ENCODE measurements at regions of chr1 and their contacts with region 1.

Region 1: GRCh38 chr1:193121616-193122593 is at the start of gene CDC73:
- DNase-seq: peak; percentile 88
- H3K4me3 ChIP-seq: peak within 1 kb of the TSS; percentile 67 to 90 (median 79)
- H3K27ac ChIP-seq: peak within 1 kb of the TSS; percentile 85 to 97 (median 96)
- H3K4me1 ChIP-seq: peaks cover 6 to 41% (median 13%) of the 10 kb centered on the region in 3 donors
- H3K27me3 ChIP-seq: no peaks in the 10 kb centered on the region
- CTCF ChIP-seq: peak; percentile 84 to 99 (median 96)
- POLR2A ChIP-seq: peak in 2 of 4 donors; percentile 83 to 90
- total RNA-seq, gene CDC73: 17.3 to 39.5 (median 26.6) TPM

Region 2: GRCh38 chr1:192808518-192809306 is 313.2 kb before region 1 on chr1 and contains the start of gene RGS2:
- intact Hi-C with region 1: loop called (anchors 5 kb)
- DNase-seq: peak; percentile 69
- H3K4me3 ChIP-seq: peak within 1 kb of the TSS; percentile 48 to 86 (median 72)
- H3K27ac ChIP-seq: peak within 1 kb of the TSS; percentile 84 to 96 (median 90)
- H3K4me1 ChIP-seq: peaks cover 0 to 42% (median 13%) of the 10 kb centered on the region in 3 donors
- H3K27me3 ChIP-seq: no peaks in the 10 kb centered on the region
- CTCF ChIP-seq: peak in 1 of 6 experiments; percentile 2
- POLR2A ChIP-seq: peak in 3 of 4 donors; percentile 90 to 99 (median 99)
- total RNA-seq, gene RGS2: 7.9 to 115 (median 26.6) TPM

Region 3: GRCh38 chr1:192877288-192877886 is 244.5 kb before region 1 on chr1:
- intact Hi-C with region 1: no loop called
- DNase-seq: no peak
- H3K4me3 ChIP-seq: no peak overlapping the region
- H3K27ac ChIP-seq: peak overlapping the region in 1 of 4 donors; percentile 34
- H3K4me1 ChIP-seq: peaks cover 0 to 9% (median 0%) of the 10 kb centered on the region in 3 donors
- H3K27me3 ChIP-seq: no peaks in the 10 kb centered on the region
- CTCF ChIP-seq: no peak
- POLR2A ChIP-seq: no peak

Region 4: DNA sequence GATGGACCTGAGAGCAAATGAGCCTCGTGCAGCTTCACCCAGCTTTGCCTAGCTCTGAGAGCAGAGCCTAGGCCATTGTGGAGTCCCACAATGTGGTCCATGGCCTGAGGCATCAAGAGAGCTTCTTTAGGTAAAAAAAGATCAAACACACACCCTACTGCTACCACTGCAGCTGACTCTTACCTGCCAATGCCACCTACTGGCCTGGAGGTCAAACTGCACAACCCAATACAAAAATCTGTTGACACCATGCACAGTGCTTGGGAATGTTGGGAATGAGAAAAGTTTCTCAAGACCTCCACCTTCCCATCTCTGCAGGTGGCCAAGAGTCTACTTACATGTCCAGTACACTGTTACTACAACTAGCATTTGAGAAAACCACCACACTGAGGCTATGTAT is 123.4 kb before region 1 on chr1:
- intact Hi-C with region 1: no loop called
- DNase-seq: no peak
- H3K4me3 ChIP-seq: no peak overlapping the region
- H3K27ac ChIP-seq: no peak overlapping the region
- H3K4me1 ChIP-seq: no peaks in the 10 kb centered on the region
- H3K27me3 ChIP-seq: no peaks in the 10 kb centered on the region
- CTCF ChIP-seq: peak in 3 of 6 experiments; percentile 5 to 54 (median 8)
- POLR2A ChIP-seq: no peak

Region 5: GRCh38 chr1:193059268-193060225 is 62.4 kb before region 1 on chr1 and contains the starts of genes RO60 and UCHL5:
- intact Hi-C with region 1: loop called (anchors 10 kb)
- DNase-seq: peak; percentile 86
- H3K4me3 ChIP-seq: peak within 1 kb of the TSS; percentile 72 to 91 (median 76)
- H3K27ac ChIP-seq: peak within 1 kb of the TSS; percentile 94 to 99 (median 97)
- H3K4me1 ChIP-seq: peaks cover 4 to 58% (median 22%) of the 10 kb centered on the region in 3 donors
- H3K27me3 ChIP-seq: no peaks in the 10 kb centered on the region
- CTCF ChIP-seq: peak in 1 of 6 experiments; percentile 35
- POLR2A ChIP-seq: peak in 3 of 4 donors; percentile 41 to 82 (median 48)
- total RNA-seq, gene RO60: 29.2 to 91.0 (median 41.7) TPM
- total RNA-seq, gene UCHL5: 27.1 to 51.4 (median 37.6) TPM

Region 6: DNA sequence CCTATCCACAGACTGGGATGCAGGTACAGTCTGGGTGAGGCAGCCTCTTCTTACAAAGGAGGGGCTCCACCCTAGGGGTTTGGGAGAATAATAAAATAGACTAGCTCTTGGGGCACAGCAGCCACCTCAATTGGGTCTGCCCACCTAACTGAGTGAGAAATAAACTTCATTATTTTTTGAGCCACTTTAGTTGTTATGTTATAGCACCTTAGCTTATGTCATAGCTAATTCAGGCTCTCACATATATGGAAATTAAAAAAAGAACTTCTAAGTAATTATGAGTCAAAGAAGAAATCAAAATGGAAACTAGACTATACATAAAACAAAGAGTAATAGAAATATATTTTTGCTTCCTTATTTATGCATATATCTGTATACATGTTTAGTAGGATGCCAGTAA is 383.0 kb after region 1 on chr1:
- intact Hi-C with region 1: no loop called
- DNase-seq: no peak
- H3K4me3 ChIP-seq: no peak overlapping the region
- H3K27ac ChIP-seq: no peak overlapping the region
- H3K4me1 ChIP-seq: no peaks in the 10 kb centered on the region
- H3K27me3 ChIP-seq: no peaks in the 10 kb centered on the region
- CTCF ChIP-seq: no peak
- POLR2A ChIP-seq: no peak